ENCODE measurements at regions of chr19 and their contacts with region 1.

Region 1: DNA sequence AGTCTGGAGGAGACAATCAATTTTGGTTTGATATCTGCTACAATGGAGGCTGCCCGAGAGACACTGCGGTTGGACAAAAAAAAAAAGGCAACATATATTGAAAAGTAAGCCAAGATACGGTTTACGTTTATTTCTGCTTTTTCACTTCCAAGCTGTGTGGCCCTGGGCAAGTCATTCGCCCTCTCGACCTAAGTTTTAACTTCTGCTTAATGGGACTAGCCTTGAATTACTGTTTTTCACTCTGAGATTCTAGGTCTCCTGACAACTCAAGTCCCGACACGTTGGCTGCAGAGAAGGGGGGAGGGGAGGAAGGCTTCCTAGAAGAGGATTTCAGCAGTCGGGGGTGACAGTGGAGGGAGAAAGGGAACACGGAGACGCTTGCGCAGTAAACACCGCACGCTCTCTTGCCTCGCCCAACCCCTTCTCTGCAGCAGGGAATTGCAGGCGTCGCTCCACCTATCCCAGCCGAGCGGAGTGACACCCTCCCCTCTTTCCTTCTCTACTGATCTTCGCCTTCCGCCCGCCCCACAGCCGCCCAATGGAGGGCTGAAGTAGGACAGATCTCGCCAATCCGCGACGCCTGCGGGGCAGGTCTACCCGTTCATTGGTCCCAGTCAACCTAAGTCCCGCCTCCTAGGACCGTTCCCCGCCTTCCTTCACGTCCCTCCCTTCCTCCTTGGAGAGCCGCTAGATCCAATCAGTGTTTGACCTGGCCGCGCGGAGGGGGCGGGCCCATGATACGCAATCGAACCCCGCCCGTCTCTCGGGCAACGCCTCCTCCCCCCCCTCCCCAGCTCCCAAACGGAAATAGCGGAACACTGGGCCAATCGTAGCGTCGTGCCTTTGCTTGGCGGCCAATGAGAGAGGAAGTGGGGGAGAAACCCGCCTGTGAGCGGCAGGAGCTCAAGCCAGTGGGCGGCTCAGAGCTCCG is 529 bp upstream of the AP2A1 start:
- DNase-seq: peak; percentile 99
- ATAC-seq: peak; percentile 93
- H3K4me3 ChIP-seq: peak overlapping the region; percentile 48 to 68 (median 54)
- H3K27ac ChIP-seq: peak overlapping the region; percentile 93
- H3K4me1 ChIP-seq: peaks cover 59% of the 10 kb centered on the region
- H3K27me3 ChIP-seq: no peaks in the 10 kb centered on the region; a peak in 1 of 5 replicates
- CTCF ChIP-seq: 0 out of 2 replicates have a peak, but pooled peaks have one; percentile 2
- EP300 ChIP-seq: no peak
- POLR2A ChIP-seq: peak; percentile 68 to 89
- RAD21 ChIP-seq: no peak

Region 2: GRCh38 chr19:49727217-49728030 is 38.8 kb before region 1 on chr19:
- CTCF ChIA-PET with region 1: no interaction called
- POLR2A ChIA-PET with region 1: no interaction called
- in situ Hi-C with region 1: no loop called
- intact Hi-C with region 1: no loop called
- DNase-seq: no peak
- ATAC-seq: no peak
- H3K4me3 ChIP-seq: no peak overlapping the region
- H3K27ac ChIP-seq: no peak overlapping the region
- H3K4me1 ChIP-seq: no peaks in the 10 kb centered on the region
- H3K27me3 ChIP-seq: 0 out of 5 replicates have a peak, but pooled peaks cover 0 to 1% of the 10 kb centered on the region in 2 experiments
- CTCF ChIP-seq: no peak
- EP300 ChIP-seq: no peak
- POLR2A ChIP-seq: no peak
- RAD21 ChIP-seq: no peak

Region 3: DNA sequence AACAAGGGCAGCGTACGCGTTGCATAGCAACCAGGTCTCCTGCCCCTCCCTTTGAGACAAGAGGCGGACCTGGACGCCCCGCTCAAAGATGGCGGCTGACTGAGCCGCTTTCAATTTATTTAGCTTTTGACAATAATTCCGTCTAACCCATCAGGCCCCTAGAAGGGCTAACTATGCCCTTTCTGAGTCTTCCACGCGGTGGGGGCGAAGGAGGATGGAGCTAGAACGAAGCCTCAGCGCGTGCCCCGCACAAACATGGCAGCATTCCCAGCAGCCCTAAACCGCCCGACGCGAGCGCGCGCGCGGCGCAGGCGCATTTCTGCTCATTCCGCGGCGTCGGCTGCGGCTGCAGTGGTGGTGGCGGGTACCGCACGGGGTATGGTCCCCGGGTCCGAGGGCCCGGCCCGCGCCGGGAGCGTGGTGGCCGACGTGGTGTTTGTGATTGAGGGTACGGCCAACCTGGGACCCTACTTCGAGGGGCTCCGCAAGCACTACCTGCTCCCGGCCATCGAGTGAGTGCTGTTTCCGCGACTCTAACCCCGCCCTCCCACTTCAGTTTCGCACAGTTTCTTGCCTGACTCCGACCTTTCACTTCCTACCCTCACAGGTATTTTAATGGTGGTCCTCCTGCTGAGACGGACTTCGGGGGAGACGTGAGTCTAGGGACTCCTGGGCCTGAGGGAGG is 51.8 kb after region 1 on chr19 and contains the start of gene MED25:
- CTCF ChIA-PET with region 1: no interaction called
- POLR2A ChIA-PET with region 1: no interaction called
- in situ Hi-C with region 1: no loop called
- intact Hi-C with region 1: loop called (anchors 10 kb)
- DNase-seq: peak; percentile 63
- ATAC-seq: peak; percentile 96
- H3K4me3 ChIP-seq: peak within 1 kb of the TSS; percentile 88 to 98 (median 91)
- H3K27ac ChIP-seq: peak within 1 kb of the TSS; percentile 88
- H3K4me1 ChIP-seq: peaks cover 11% of the 10 kb centered on the region
- H3K27me3 ChIP-seq: no peaks in the 10 kb centered on the region; a peak in 1 of 5 replicates
- CTCF ChIP-seq: no peak
- EP300 ChIP-seq: no peak
- POLR2A ChIP-seq: peak; percentile 80 to 82
- RAD21 ChIP-seq: no peak; the same call in 1 of the 2 replicates
- total RNA-seq, gene MED25: 11.1 and 11.3 TPM in 2 replicates

Region 4: GRCh38 chr19:49869441-49870176 is 103.3 kb after region 1 on chr19:
- CTCF ChIA-PET with region 1: no interaction called
- POLR2A ChIA-PET with region 1: interaction called, 10 read pairs
- in situ Hi-C with region 1: no loop called
- intact Hi-C with region 1: no loop called
- DNase-seq: peak; percentile 99
- ATAC-seq: peak; percentile 82
- H3K4me3 ChIP-seq: peak overlapping the region; percentile 45 to 78 (median 67)
- H3K27ac ChIP-seq: peak overlapping the region; percentile 78
- H3K4me1 ChIP-seq: peaks cover 49% of the 10 kb centered on the region
- H3K27me3 ChIP-seq: no peaks in the 10 kb centered on the region; a peak in 1 of 5 replicates
- CTCF ChIP-seq: no peak
- EP300 ChIP-seq: peak in 1 of 2 experiments; percentile 91; a peak in 2 of 4 replicates
- POLR2A ChIP-seq: peak; percentile 13 to 63; a peak in 2 of 4 replicates
- RAD21 ChIP-seq: peak; percentile 58; the same call in 1 of the 2 replicates

Region 5: DNA sequence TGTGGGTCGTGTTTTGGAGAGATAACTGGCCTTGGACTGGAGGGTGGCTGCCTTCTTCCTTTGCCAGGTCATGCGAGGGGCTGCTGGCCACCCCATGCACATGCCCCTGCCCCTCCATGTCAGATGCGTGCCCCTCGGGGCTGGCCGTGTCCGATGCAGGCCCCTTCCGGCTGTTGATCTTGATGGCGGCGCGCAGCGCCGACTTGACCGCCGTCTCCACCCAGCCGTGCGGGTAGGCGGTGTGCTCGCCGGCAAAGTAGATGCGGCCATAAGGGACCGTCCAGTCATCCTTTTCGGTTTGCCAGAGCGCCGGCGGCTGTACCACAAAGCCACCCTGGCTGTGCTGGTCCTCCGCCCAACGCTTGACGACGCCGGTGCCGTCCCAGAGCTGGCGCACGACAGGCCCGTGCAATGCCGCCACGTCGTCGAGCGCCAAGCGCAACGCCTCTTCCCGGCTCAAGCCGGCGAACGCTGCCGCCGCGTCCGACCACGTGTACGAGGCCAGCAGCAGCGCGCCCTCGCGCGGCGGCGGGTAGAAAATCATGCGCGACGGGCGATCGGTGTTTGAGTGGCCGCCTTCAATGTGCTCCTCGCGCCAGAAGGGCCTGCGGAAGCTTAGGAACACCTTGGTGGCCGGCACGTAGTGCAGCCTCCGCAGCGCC is 123.5 kb after region 1 on chr19:
- CTCF ChIA-PET with region 1: no interaction called
- POLR2A ChIA-PET with region 1: no interaction called
- in situ Hi-C with region 1: no loop called
- intact Hi-C with region 1: no loop called
- DNase-seq: no peak
- ATAC-seq: no peak
- H3K4me3 ChIP-seq: no peak overlapping the region
- H3K27ac ChIP-seq: no peak overlapping the region
- H3K4me1 ChIP-seq: no peaks in the 10 kb centered on the region
- H3K27me3 ChIP-seq: peaks cover 0 to 4% of the 10 kb centered on the region in 2 experiments; a peak in 2 of 5 replicates
- CTCF ChIP-seq: no peak
- EP300 ChIP-seq: no peak
- POLR2A ChIP-seq: no peak
- RAD21 ChIP-seq: no peak

Measured in HepG2 (cell line).